Activated CD8-positive, alpha-beta T cell treated with anti-CD3 and anti-CD28 coated beads for 36 hours (primary cell): ENCODE measurements at regions of chr9 and their contacts with region 1.

Region 1: GRCh38 chr9:76107482-76107881 is 217.0 kb downstream of the PCSK5 start:
- DNase-seq: no peak
- ATAC-seq: no peak
- H3K4me3 Mint-ChIP-seq: no peak overlapping the region
- H3K27ac Mint-ChIP-seq: no peak overlapping the region
- H3K4me1 Mint-ChIP-seq: no peaks in the 10 kb centered on the region
- H3K27me3 Mint-ChIP-seq: no peaks in the 10 kb centered on the region
- CTCF ChIP-seq: no peak

Region 2: DNA sequence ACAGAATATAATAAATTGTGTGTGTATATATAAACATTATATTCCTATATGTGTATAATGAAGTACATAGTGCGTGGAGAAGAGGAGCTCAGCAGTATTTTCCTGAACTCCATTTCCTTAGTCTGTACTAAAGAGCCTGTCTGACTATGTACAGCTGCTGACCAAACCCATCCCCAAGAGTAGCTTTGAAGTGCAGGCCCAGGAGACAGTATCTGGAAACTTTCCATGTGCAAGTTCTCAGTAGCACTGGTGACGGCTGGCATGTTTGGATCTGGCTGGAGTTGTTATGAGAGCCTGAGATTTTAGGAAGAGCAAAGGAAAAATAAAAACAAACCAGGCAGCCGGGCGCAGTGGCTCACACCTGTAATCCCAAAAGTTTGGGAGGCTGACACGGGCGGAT is 42.5 kb after region 1 on chr9:
- CTCF ChIA-PET with region 1: no interaction called
- POLR2A ChIA-PET with region 1: no interaction called
- intact Hi-C with region 1: no loop called
- DNase-seq: no peak
- ATAC-seq: no peak
- H3K4me3 Mint-ChIP-seq: no peak overlapping the region
- H3K27ac Mint-ChIP-seq: no peak overlapping the region
- H3K4me1 Mint-ChIP-seq: no peaks in the 10 kb centered on the region
- H3K27me3 Mint-ChIP-seq: no peaks in the 10 kb centered on the region
- CTCF ChIP-seq: no peak

Region 3: GRCh38 chr9:76161541-76161940 is 54.1 kb after region 1 on chr9:
- CTCF ChIA-PET with region 1: interaction called, 3 read pairs
- POLR2A ChIA-PET with region 1: no interaction called
- intact Hi-C with region 1: loop called (anchors 10 kb)
- DNase-seq: no peak
- ATAC-seq: no peak
- H3K4me3 Mint-ChIP-seq: no peak overlapping the region
- H3K27ac Mint-ChIP-seq: no peak overlapping the region
- H3K4me1 Mint-ChIP-seq: peaks cover 3% of the 10 kb centered on the region
- H3K27me3 Mint-ChIP-seq: no peaks in the 10 kb centered on the region
- CTCF ChIP-seq: no peak